Activated B cell treated with CpG ODN at 0.5 μM for 24 hours (primary cell): ENCODE measurements at regions of chr9 and their contacts with region 1.

Region 1: GRCh38 chr9:96418074-96418809 is at the start of gene ZNF367:
- DNase-seq: peak; percentile 89
- ATAC-seq: peak; percentile 76
- H3K4me3 Mint-ChIP-seq: peak within 1 kb of the TSS; percentile 93
- H3K27ac Mint-ChIP-seq: peak within 1 kb of the TSS; percentile 92
- H3K4me1 Mint-ChIP-seq: peaks cover 44% of the 10 kb centered on the region
- H3K27me3 Mint-ChIP-seq: no peaks in the 10 kb centered on the region
- CTCF ChIP-seq: no peak
- total RNA-seq, gene ZNF367: 4.0 and 4.3 TPM in 2 replicates

Region 2: DNA sequence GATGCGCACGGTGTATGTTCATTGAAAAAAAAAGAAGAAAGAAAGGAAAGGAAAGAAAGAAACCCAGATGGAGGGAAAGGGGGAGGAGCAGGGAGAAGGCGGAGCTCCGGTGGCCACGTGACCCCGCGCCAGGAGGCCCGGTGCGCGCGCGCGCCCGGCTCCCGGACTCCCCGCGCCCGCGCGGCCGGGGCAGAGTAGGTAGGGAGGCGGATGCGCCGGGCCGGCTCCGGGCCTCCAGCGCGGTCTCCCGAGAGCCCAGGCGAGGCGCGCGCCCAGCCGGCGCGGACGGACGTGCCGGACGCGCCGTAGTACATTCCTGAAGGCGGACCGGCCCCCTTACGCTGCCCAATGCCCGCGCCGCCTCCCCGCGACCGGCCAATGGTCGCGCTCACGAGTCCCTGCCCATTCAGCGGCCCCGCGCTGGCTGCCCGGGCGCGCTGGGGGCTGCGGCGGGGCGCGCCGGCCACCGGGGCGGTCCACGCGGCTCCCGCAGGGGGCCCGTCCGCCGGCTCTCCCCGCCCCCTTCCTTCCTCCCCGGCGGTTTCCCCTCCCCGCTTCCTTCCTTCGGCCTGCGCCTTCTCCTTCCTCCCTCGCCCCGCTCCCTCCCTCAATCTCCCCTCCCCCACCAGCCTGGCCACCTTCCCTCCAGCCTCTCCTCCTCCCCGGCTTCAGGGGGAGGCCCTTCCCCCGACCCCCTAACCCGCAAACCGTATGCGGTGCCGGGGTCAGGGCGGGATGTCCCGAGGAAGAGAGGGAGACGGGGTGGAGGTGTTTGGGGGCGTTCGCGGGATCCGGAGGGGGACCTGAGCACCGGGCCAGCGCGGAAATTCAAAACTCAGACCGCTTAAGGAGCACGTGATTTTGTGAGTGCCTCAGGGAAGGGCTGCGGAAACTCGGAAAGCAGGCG is 907.3 kb before region 1 on chr9:
- CTCF ChIA-PET with region 1: no interaction called
- POLR2A ChIA-PET with region 1: no interaction called
- intact Hi-C with region 1: loop called (anchors 5 kb)
- DNase-seq: peak; percentile 64
- ATAC-seq: peak; percentile 38
- H3K4me3 Mint-ChIP-seq: peak overlapping the region; percentile 92
- H3K27ac Mint-ChIP-seq: peak overlapping the region; percentile 70
- H3K4me1 Mint-ChIP-seq: peaks cover 47% of the 10 kb centered on the region
- H3K27me3 Mint-ChIP-seq: peaks cover 40% of the 10 kb centered on the region
- CTCF ChIP-seq: no peak

Region 3: DNA sequence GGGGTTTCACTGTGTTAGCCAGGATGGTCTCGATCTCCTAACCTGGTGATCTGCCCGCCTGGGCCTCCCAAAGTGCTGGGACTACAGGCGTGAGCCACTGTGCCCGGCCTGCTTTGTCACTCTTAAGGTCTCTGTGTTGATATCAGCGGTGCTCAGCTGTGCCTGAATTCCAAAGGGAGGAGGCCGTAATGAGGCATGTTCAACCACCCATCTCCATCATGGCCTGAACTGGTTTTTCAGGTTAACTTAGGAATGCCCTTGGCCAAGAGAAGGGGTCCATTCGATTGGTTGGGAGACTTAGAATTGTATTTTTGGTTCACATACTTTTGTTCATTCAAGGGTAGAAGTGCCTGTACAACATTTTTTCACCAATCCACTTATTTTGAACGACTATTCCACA is 138.3 kb before region 1 on chr9:
- CTCF ChIA-PET with region 1: no interaction called
- POLR2A ChIA-PET with region 1: no interaction called
- intact Hi-C with region 1: no loop called
- DNase-seq: no peak
- ATAC-seq: no peak
- H3K4me3 Mint-ChIP-seq: no peak overlapping the region
- H3K27ac Mint-ChIP-seq: no peak overlapping the region
- H3K4me1 Mint-ChIP-seq: no peaks in the 10 kb centered on the region
- H3K27me3 Mint-ChIP-seq: peaks cover 1% of the 10 kb centered on the region
- CTCF ChIP-seq: no peak

Region 4: GRCh38 chr9:96383165-96383942 is 34.9 kb before region 1 on chr9 and contains the start of gene SLC35D2:
- CTCF ChIA-PET with region 1: no interaction called
- POLR2A ChIA-PET with region 1: interaction called, 7 read pairs
- intact Hi-C with region 1: loop called (anchors 1 kb)
- DNase-seq: peak; percentile 21
- ATAC-seq: peak; percentile 76
- H3K4me3 Mint-ChIP-seq: peak within 1 kb of the TSS; percentile 79
- H3K27ac Mint-ChIP-seq: peak within 1 kb of the TSS; percentile 47
- H3K4me1 Mint-ChIP-seq: peaks cover 10% of the 10 kb centered on the region
- H3K27me3 Mint-ChIP-seq: no peaks in the 10 kb centered on the region
- CTCF ChIP-seq: no peak
- total RNA-seq, gene SLC35D2: 9.3 and 10.9 TPM in 2 replicates

Region 5: DNA sequence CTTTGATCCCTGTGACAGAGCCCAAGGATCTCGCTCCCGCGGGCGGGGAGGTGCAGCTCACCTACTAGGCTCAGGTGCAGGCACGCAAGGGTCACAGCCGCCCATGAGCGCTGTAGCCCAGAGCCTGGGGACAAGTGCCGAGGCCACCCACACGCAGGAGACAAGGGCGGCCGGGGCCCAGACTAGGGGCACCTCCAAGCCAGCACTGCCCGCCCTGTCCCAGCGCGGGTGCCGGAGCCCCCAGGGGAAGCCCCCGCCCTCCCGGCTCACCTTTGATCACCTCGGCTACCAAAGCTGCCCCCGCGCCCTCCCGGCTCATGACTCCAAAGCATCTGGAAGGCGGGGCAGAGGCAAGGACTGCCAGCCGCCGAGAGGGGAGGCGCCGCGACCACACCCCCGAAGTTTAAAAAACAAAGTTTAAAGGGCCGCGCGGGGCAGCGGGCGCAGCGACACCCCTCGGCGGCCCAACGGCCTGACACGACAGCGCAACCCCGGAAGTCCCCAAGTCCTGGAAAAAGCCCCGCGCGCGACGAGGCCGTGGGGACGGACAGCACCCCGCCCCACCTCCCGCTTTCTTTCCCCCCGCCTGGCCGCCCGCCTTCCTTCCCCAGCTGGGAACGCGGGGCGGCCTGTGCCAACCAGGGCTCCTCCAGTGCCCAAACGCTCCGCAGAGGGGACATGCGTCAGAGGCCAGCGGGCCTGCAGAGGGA is 148.4 kb after region 1 on chr9:
- CTCF ChIA-PET with region 1: interaction called, 4 read pairs
- POLR2A ChIA-PET with region 1: interaction called, 11 read pairs
- intact Hi-C with region 1: loop called (anchors 1 kb)
- DNase-seq: peak; percentile 71
- ATAC-seq: peak; percentile 89
- H3K4me3 Mint-ChIP-seq: peak overlapping the region; percentile 86
- H3K27ac Mint-ChIP-seq: peak overlapping the region; percentile 81
- H3K4me1 Mint-ChIP-seq: peaks cover 17% of the 10 kb centered on the region
- H3K27me3 Mint-ChIP-seq: peaks cover 3% of the 10 kb centered on the region
- CTCF ChIP-seq: no peak

Region 6: DNA sequence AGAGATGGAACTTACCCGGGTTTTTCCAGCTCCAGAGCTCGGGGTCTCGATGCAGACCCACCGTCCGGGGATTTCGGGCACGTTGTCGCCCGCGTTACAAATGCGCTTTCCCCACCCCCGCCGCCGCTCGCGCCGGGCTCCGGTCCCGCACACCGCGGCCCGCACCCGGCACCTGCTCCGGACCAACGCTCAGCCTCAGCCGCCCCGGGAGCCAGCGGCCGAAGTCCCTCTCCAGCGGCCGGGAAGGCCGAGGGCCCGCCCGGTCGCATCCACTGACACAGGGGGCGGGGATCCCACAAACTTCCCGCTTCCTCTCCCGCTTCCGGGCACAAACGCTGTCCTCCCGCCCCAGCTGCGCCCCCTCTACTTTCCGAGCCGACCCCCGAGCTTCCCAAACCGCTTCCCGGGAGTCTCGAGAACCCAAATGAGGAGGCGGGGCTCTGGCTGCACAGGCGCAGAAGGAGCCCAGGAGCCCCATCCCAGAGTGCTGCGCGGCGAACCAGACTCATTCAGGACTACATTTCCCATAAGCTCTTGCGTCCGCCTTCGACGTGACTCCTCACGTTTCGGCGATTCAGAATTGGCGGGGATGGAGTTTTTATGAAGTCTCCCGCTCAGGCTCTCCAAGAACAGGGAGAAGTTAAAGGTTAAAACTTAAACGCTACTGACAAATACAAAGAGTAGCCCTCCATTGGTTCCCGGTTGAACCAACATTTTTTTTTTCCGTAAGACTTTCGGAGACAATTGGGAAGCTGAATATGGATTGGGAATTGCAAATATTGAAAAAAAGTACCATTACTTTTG is 436.0 kb after region 1 on chr9 and contains the start of gene ZNF782:
- CTCF ChIA-PET with region 1: no interaction called
- POLR2A ChIA-PET with region 1: no interaction called
- intact Hi-C with region 1: loop called (anchors 1 kb)
- DNase-seq: peak; percentile 83
- ATAC-seq: peak; percentile 95
- H3K4me3 Mint-ChIP-seq: peak within 1 kb of the TSS; percentile 100
- H3K27ac Mint-ChIP-seq: peak within 1 kb of the TSS; percentile 98
- H3K4me1 Mint-ChIP-seq: peaks cover 40% of the 10 kb centered on the region
- H3K27me3 Mint-ChIP-seq: peaks cover 9% of the 10 kb centered on the region
- CTCF ChIP-seq: no peak
- total RNA-seq, gene ZNF782: 7.7 and 8.0 TPM in 2 replicates

Region 7: GRCh38 chr9:97982683-97983588 is 1564.7 kb after region 1 on chr9 and contains the start of gene ANP32B:
- CTCF ChIA-PET with region 1: no interaction called
- POLR2A ChIA-PET with region 1: no interaction called
- intact Hi-C with region 1: loop called (anchors 5 kb)
- DNase-seq: peak; percentile 95
- ATAC-seq: peak; percentile 80
- H3K4me3 Mint-ChIP-seq: peak within 1 kb of the TSS; percentile 86
- H3K27ac Mint-ChIP-seq: peak within 1 kb of the TSS; percentile 92
- H3K4me1 Mint-ChIP-seq: peaks cover 38% of the 10 kb centered on the region
- H3K27me3 Mint-ChIP-seq: no peaks in the 10 kb centered on the region
- CTCF ChIP-seq: no peak
- total RNA-seq, gene ANP32B: 162 and 173 TPM in 2 replicates